Aorta (tissue), 5 donors: ENCODE measurements at regions of chr7 and their contacts with region 1.

Region 1: GRCh38 chr7:102125127-102125561 is 161.5 kb upstream of the SH2B2 start:
- DNase-seq: peak; percentile 88 to 94
- ATAC-seq: peak; percentile 91
- H3K4me3 ChIP-seq: no peak overlapping the region
- H3K27ac ChIP-seq: peak overlapping the region in 1 of 2 donors; percentile 58
- H3K4me1 ChIP-seq: no peaks in the 10 kb centered on the region
- H3K27me3 ChIP-seq: no peaks in the 10 kb centered on the region

Region 2: DNA sequence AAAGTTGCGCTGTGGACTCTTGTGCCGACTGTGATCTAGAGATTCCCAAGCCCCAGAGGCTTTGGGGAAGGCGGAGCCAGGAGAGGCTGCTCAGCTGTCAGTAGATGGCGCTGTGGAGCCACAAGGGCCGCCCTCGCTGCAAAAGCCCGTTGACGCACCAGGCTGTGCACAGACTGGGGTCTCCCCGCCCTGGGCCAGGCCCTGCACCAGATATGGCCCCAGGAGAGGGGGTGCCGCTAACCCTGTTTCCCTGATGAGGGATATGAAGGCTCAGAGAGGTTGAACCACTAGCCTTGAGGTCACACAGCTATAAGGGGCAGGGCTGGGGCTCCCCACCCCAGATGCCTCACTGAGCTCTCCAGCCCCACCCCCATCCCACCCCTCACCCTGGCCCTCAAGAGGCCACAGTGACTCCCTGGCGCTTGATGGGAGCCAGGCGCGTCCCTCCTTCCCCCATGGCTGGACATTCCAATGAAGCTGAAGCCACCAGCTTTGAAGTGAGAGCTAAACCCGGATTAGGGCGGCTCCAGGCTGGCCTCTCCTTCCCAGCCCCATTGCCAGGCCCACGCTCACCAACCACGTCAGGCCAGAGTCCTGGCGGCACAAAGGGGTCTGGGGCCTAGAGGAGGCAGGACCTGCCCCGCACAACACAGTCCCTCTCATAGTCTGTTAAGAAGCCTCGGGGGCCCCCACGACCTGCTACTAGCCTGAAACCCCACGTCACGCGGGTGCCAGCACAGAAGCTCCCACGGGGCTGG is 522.5 kb before region 1 on chr7:
- intact Hi-C with region 1: loop called in 1 of 2 experiments (anchors 5 kb)
- DNase-seq: peak; percentile 90 to 94
- ATAC-seq: peak; percentile 87
- H3K4me3 ChIP-seq: no peak overlapping the region
- H3K27ac ChIP-seq: no peak overlapping the region
- H3K4me1 ChIP-seq: no peaks in the 10 kb centered on the region
- H3K27me3 ChIP-seq: no peaks in the 10 kb centered on the region

Region 3: DNA sequence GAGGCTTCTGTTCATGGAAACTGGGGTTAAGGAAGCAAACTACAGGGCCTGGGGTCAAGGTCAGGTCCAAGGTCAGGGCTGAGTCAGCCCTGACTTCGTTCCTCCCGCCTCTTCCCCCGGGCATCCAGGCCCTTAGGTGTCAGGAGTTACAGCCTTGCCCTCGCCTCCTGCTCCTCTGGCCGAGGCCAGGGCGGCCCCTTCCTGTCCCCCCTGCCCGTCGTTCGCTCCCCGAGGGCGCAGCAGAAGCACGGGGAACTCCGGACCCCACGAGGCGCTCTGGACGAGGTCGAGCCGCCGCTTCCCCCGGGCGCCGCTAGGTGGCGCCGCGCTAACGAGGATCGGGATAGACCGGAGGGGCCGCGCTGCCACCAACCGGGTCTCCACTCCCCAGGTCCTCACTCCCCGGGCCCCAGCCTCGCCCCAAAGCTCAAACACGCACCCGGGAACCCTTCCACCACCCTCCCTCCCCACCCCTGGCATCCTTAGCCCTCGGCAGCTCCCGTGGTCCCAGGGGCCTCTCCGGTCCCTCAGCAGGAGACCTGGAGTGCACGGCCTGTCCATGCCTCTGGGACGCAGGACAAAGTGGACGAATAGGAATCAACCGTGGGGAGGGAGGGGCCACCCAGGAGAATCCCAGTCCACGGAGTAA is 436.8 kb before region 1 on chr7:
- intact Hi-C with region 1: loop called in 1 of 2 experiments (anchors 10 kb)
- DNase-seq: peak; percentile 85 to 96
- ATAC-seq: peak; percentile 91
- H3K4me3 ChIP-seq: no peak overlapping the region
- H3K27ac ChIP-seq: no peak overlapping the region
- H3K4me1 ChIP-seq: no peaks in the 10 kb centered on the region
- H3K27me3 ChIP-seq: no peaks in the 10 kb centered on the region

Region 4: DNA sequence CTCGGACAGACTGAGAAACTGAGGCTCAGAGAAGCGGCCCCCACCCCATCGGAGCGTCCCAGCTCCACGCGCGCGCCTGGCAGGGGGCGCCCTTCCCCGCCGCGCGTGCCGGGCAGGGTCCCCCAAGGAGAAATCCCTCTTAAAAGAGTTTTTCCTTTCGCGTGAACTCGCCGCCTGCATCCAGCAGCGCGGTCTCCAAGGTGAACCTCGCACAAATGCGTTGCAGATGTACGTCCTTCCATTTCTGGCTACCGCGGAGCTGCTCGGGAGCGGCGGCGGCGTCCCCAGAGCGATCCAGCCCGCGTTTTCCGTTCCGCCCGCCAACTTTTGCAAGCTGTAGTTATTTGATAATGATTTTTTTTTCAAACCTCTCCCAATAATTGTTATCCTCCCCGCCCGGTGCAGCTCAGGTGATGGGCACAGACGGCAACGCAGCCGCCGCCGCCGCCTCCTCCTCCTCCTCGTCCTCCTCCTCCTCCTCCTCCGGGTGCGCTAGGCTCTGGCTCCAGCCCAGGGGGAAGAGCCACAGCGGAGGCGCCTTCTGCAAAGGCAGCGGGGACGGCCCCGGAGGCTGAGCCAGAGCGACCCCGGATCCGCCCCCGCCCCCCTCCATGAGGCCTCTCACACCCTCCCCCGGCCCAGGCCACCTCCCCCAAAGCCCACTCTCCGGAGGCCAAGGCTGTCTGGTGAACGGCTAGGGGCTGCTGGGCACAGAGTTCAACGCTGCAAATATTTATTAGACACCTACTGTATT is 381.7 kb before region 1 on chr7:
- intact Hi-C with region 1: loop called in 1 of 2 experiments (anchors 10 kb)
- DNase-seq: peak; percentile 64 to 85
- ATAC-seq: peak; percentile 50
- H3K4me3 ChIP-seq: peak overlapping the region; percentile 2 to 56
- H3K27ac ChIP-seq: no peak overlapping the region
- H3K4me1 ChIP-seq: no peaks in the 10 kb centered on the region
- H3K27me3 ChIP-seq: no peaks in the 10 kb centered on the region

Region 5: DNA sequence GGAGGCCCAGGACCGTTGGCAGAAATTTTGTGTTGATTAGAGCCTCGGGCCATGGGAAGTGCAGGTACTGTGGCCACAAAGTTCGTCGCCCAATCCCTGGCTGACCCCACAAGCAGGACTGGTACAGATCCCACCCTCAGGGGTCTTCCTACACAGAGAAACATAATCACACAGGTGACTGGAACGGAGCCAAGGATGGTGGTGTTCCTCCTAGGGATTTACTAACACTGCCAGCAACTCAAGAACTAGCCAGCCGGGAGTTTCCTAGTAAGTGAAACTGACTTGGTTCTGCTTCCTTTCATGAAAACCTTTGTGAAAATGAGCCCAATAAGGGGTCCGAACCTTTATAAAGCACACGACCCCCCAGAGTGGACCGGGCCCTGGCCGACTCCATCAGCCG is 302.0 kb before region 1 on chr7:
- intact Hi-C with region 1: loop called in 1 of 2 experiments (anchors 5 kb)
- DNase-seq: no peak
- ATAC-seq: no peak
- H3K4me3 ChIP-seq: no peak overlapping the region
- H3K27ac ChIP-seq: no peak overlapping the region
- H3K4me1 ChIP-seq: peaks cover 0 to 3% of the 10 kb centered on the region in 2 donors
- H3K27me3 ChIP-seq: no peaks in the 10 kb centered on the region

Region 6: DNA sequence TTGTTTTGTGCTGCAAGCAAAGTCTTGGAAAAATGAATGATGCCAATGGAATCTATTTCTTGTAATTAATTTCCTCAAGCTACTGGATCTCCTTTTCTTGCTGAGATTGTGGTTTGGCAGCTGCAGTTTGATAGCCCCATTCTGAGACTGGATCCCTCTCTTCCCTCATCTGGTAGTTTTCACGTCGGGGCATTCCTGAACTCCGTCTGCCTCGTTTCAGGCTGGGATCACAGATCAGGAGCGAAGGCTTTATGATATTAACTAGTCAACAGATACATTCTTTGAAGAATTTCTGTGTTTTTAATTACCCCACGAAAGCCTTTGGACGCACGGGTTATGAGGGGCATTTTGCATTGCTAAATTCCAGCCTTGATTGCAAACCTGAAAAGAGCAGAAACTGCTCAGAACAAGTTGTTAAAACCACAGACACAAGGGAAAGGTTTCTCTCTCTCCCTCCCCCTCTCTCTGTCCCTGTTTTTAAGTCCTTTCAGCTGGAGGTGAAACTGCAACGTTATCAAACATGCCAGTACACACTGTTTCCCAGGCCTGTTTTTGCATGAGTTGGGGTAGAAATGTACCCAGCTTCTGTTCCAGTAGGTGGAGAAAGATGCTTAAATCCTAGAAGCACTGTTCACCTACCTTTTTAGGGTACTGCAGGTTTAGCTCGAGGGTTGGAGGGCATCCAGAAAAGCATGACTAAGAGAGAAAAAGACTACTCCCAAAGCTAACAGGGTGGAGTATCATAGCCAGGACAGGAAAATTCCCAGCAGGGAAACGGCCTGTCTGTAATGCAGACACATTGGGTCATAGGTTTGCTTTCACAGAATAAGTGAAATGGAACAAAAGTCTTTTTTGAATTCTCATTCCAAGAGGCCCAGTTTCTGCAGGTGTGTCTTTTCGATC is 183.4 kb before region 1 on chr7:
- intact Hi-C with region 1: loop called in 1 of 2 experiments (anchors 10 kb)
- DNase-seq: peak in 1 of 2 donors; percentile 37
- ATAC-seq: peak; percentile 70
- H3K4me3 ChIP-seq: no peak overlapping the region
- H3K27ac ChIP-seq: peak overlapping the region in 1 of 2 donors; percentile 70
- H3K4me1 ChIP-seq: peaks cover 2 to 3% of the 10 kb centered on the region in 2 donors
- H3K27me3 ChIP-seq: no peaks in the 10 kb centered on the region

Region 7: GRCh38 chr7:102008535-102009345 is 116.4 kb before region 1 on chr7:
- intact Hi-C with region 1: loop called in 1 of 2 experiments (anchors 10 kb)
- DNase-seq: no peak
- ATAC-seq: no peak
- H3K4me3 ChIP-seq: no peak overlapping the region
- H3K27ac ChIP-seq: peak overlapping the region in 1 of 2 donors; percentile 76
- H3K4me1 ChIP-seq: no peaks in the 10 kb centered on the region
- H3K27me3 ChIP-seq: no peaks in the 10 kb centered on the region

Region 8: DNA sequence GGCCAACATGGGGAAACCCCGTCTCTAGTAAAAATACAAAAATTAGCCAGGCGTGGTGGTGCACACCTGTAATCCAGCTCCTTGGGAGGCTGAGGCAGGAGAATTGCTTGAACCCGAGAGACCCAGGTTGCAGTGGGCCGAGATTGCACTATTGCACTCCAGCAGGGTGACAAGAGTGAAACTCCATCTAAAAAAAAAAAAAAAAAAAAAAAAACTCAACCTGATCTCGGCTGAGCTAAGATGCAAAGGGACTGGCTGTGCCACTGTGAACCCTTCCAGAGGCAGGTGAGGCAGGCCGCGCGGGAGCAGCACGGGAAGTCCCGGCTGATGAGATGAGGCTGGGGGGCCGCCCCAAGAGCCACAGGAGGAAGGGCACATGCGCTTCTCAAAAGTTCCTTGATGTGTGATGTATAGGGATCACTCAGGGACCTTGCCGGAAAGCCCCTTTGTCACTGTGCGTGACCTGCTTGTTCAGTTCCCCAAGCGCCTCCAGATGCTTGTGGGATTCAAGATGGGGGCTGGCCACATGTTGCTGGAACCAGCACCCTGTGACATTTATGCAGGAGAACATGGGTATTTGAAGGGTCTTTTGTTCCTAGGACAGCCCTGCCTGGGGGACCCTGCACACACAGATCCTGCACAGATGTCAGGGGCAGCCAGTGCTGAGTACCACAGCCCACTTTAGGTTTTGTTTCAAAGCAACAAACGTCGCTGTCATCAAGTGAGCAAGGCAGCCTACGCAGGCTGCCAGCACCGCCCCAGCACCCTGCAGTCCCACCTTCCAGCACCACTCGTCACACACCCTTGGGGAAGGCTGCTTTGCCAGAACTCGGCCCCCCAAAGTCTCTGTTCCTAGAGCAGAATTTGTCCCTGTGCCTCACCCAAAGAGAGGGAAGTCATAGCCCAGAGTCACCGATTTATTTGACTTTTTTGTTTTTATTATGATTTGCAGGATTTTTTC is 86.7 kb after region 1 on chr7:
- intact Hi-C with region 1: no loop called
- DNase-seq: no peak
- ATAC-seq: no peak
- H3K4me3 ChIP-seq: no peak overlapping the region
- H3K27ac ChIP-seq: no peak overlapping the region
- H3K4me1 ChIP-seq: no peaks in the 10 kb centered on the region
- H3K27me3 ChIP-seq: no peaks in the 10 kb centered on the region